Thyroid gland (tissue), 4 donors: ENCODE measurements at regions of chr15 and their contacts with region 1.

Region 1: DNA sequence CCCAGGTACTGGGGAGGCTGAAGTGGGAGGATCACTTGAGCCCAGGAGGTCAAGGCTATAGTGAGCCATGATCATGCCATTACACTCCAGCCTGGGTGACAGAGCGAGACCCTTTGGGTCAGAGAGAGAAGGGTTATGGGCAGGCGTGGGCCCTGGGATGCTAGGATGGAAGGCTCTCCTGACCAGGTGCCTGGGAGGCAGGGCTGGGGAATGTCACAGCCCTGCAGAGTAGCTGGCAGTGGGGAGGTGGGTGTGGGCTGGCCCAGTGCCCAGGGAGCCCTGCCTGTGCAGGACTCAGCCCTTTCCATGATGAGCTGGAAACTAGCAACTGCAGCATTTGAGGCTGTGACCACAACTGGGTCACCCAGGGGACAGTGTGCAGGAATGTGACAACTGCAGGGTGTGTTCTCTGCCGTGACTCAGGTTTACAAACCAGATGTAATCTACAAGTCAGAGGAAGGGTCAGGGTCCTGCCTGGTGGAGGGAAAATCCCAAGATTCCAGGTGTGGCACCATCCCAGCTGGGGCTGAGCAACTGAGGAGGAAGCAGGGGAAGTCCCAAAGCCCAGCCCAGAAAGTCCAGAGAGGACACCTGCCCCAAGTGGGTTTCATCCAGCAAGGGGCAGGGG is 45.4 kb downstream of the SLC28A1 start:
- DNase-seq: no peak
- H3K4me3 ChIP-seq: no peak overlapping the region
- H3K27ac ChIP-seq: no peak overlapping the region
- H3K4me1 ChIP-seq: peaks cover 3 to 8% of the 10 kb centered on the region in 2 donors
- H3K27me3 ChIP-seq: no peaks in the 10 kb centered on the region
- CTCF ChIP-seq: no peak
- POLR2A ChIP-seq: no peak

Region 2: GRCh38 chr15:84594617-84595290 is 335.1 kb before region 1 on chr15:
- intact Hi-C with region 1: loop called (anchors 5 kb)
- DNase-seq: no peak
- H3K4me3 ChIP-seq: no peak overlapping the region
- H3K27ac ChIP-seq: no peak overlapping the region
- H3K4me1 ChIP-seq: no peaks in the 10 kb centered on the region
- H3K27me3 ChIP-seq: no peaks in the 10 kb centered on the region
- CTCF ChIP-seq: no peak
- POLR2A ChIP-seq: no peak

Region 3: GRCh38 chr15:84748274-84749110 is 181.4 kb before region 1 on chr15 and contains the start of gene ZNF592:
- intact Hi-C with region 1: loop called (anchors 5 kb)
- DNase-seq: peak; percentile 85 to 86
- H3K4me3 ChIP-seq: peak within 1 kb of the TSS; percentile 75 to 97 (median 96)
- H3K27ac ChIP-seq: peak within 1 kb of the TSS; percentile 98 to 100 (median 99)
- H3K4me1 ChIP-seq: peaks cover 25 to 46% of the 10 kb centered on the region in 2 donors
- H3K27me3 ChIP-seq: no peaks in the 10 kb centered on the region
- CTCF ChIP-seq: peak in 3 of 6 experiments; percentile 63 to 70 (median 68)
- POLR2A ChIP-seq: peak; percentile 39 to 74
- total RNA-seq, gene ZNF592: 18.3 to 28.0 (median 21.2) TPM

Region 4: DNA sequence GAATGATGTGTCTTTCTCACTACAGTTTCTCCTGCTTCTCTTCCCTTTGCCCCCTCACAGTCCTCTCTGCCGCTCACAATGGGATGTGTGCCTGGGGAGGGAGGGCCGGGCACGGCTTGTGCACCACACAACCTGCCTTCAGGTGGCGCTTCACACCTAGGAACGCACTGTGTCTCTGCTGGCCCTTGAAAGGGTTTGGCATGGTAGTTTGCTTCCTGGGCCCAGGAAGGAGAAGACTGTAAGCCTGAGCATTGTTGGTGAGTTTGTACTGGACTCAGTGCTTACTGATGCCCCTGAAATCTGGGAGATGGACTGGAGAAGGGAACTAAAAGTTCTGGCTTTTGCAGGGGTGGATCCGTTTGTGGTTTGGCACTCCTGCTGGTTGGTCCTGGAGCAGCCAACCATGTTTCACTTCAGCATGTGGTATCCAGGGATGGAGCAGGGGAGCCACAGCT is 103.5 kb before region 1 on chr15:
- intact Hi-C with region 1: loop called (anchors 10 kb)
- DNase-seq: peak in 1 of 2 donors; percentile 9
- H3K4me3 ChIP-seq: no peak overlapping the region
- H3K27ac ChIP-seq: no peak overlapping the region
- H3K4me1 ChIP-seq: peaks cover under 1 to 6% of the 10 kb centered on the region in 2 donors
- H3K27me3 ChIP-seq: no peaks in the 10 kb centered on the region
- CTCF ChIP-seq: no peak
- POLR2A ChIP-seq: no peak